Prostate gland (tissue), 2 donors: ENCODE measurements at regions of chr22 and their contacts with region 1.

Region 1: GRCh38 chr22:36470162-36470993 is 11.1 kb downstream of the TXN2 start:
- DNase-seq: peak; percentile 86
- H3K4me3 ChIP-seq: no peak overlapping the region
- H3K27ac ChIP-seq: peak overlapping the region; percentile 82
- H3K4me1 ChIP-seq: peaks cover 16% of the 10 kb centered on the region
- H3K27me3 ChIP-seq: no peaks in the 10 kb centered on the region
- CTCF ChIP-seq: peak; percentile 93 to 99 (median 96)
- POLR2A ChIP-seq: peak; percentile 9

Region 2: GRCh38 chr22:35418088-35418487 is 1052.3 kb before region 1 on chr22:
- intact Hi-C with region 1: no loop called
- DNase-seq: no peak
- H3K4me3 ChIP-seq: no peak overlapping the region
- H3K27ac ChIP-seq: no peak overlapping the region
- H3K4me1 ChIP-seq: no peaks in the 10 kb centered on the region
- H3K27me3 ChIP-seq: no peaks in the 10 kb centered on the region
- CTCF ChIP-seq: no peak
- POLR2A ChIP-seq: no peak

Region 3: GRCh38 chr22:36277482-36278291 is 192.7 kb before region 1 on chr22:
- intact Hi-C with region 1: no loop called
- DNase-seq: peak; percentile 50
- H3K4me3 ChIP-seq: no peak overlapping the region
- H3K27ac ChIP-seq: no peak overlapping the region
- H3K4me1 ChIP-seq: peaks cover 3% of the 10 kb centered on the region
- H3K27me3 ChIP-seq: no peaks in the 10 kb centered on the region
- CTCF ChIP-seq: peak; percentile 41 to 75 (median 60)
- POLR2A ChIP-seq: no peak

Region 4: GRCh38 chr22:36301384-36301828 is 169.0 kb before region 1 on chr22:
- intact Hi-C with region 1: loop called (anchors 1 kb)
- DNase-seq: peak; percentile 77
- H3K4me3 ChIP-seq: no peak overlapping the region
- H3K27ac ChIP-seq: peak overlapping the region; percentile 63 to 71
- H3K4me1 ChIP-seq: peaks cover 11% of the 10 kb centered on the region
- H3K27me3 ChIP-seq: no peaks in the 10 kb centered on the region
- CTCF ChIP-seq: peak; percentile 95 to 98 (median 96)
- POLR2A ChIP-seq: peak; percentile 14

Region 5: DNA sequence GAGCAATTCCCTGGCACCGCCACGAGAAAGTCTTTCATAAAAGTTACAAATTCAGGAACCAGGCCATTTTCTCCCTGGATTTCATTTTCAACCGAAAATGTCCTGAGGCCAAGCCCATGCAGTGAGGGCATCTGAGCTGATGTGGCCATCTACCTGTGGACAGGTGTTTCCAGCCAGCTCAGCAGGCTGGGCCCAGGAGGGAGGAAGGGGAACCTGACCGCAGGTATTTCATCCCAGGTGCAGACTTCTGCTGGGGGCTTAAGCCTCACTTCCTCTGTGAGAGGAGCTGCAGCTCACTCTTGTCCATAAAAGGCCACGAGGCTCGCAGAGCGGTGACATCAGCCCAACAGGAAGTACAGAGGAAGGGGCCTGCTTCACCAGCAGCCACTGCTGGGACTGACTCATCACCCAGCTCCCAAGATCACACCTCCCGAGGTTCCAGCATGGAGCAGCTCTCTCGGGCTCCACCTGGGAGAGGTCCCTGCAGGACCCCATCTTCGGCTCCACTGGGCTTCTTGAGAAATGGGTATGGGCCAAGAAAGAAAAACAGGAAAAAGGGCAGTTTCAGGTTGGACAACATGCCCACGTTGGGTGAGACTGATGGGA is 139.0 kb before region 1 on chr22:
- intact Hi-C with region 1: loop called (anchors 2 kb)
- DNase-seq: peak; percentile 80
- H3K4me3 ChIP-seq: no peak overlapping the region
- H3K27ac ChIP-seq: peak overlapping the region; percentile 94 to 96
- H3K4me1 ChIP-seq: peaks cover 97% of the 10 kb centered on the region
- H3K27me3 ChIP-seq: no peaks in the 10 kb centered on the region
- CTCF ChIP-seq: no peak
- POLR2A ChIP-seq: peak; percentile 53

Region 6: GRCh38 chr22:36365020-36365411 is 105.4 kb before region 1 on chr22:
- intact Hi-C with region 1: loop called (anchors 5 kb)
- DNase-seq: no peak
- H3K4me3 ChIP-seq: no peak overlapping the region
- H3K27ac ChIP-seq: peak overlapping the region; percentile 91 to 96
- H3K4me1 ChIP-seq: peaks cover 70% of the 10 kb centered on the region
- H3K27me3 ChIP-seq: no peaks in the 10 kb centered on the region
- CTCF ChIP-seq: no peak
- POLR2A ChIP-seq: no peak

Region 7: GRCh38 chr22:36387752-36388518 is 82.4 kb before region 1 on chr22 and contains the start of gene MYH9:
- intact Hi-C with region 1: loop called (anchors 5 kb)
- DNase-seq: peak; percentile 100
- H3K4me3 ChIP-seq: peak within 1 kb of the TSS; percentile 99
- H3K27ac ChIP-seq: peak within 1 kb of the TSS; percentile 99 to 100
- H3K4me1 ChIP-seq: peaks cover 13% of the 10 kb centered on the region
- H3K27me3 ChIP-seq: no peaks in the 10 kb centered on the region
- CTCF ChIP-seq: peak in 1 of 4 experiments; percentile 35
- POLR2A ChIP-seq: peak; percentile 100
- total RNA-seq, gene MYH9: 295 to 329 TPM